ENCODE measurements at regions of chr1 and their contacts with region 1.

Region 1: GRCh38 chr1:183993132-183993531 is 44.4 kb downstream of the COLGALT2 start:
- DNase-seq: peak; percentile 57
- ATAC-seq: peak; percentile 69
- H3K4me3 ChIP-seq: no peak overlapping the region
- H3K27ac ChIP-seq: no peak overlapping the region
- H3K4me1 ChIP-seq: peaks cover 32% of the 10 kb centered on the region
- H3K27me3 ChIP-seq: no peaks in the 10 kb centered on the region
- CTCF ChIP-seq: no peak

Region 2: DNA sequence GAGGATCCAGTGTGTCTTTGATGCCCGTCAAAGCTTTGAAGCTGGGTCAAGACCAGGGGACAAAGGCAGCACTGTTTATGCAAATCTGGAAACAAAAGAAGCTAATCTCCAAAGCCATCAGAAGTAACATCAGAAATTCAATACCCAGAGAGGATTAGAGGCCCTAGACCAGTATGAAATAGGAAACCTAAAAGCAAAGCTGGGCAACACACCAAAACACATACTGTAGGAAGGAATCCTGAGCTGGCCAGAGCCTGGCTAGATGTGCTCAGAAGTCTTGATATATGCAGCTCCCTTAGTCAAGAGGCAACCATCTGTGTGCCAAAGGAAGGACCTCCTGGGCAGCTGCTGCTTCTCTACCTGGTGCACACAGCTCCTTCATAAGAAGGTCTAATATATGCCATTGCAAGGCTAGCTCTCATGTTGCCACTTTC is 32.1 kb after region 1 on chr1:
- CTCF ChIA-PET with region 1: no interaction called
- POLR2A ChIA-PET with region 1: no interaction called
- intact Hi-C with region 1: loop called (anchors 5 kb)
- DNase-seq: peak; percentile 70
- ATAC-seq: peak; percentile 99
- H3K4me3 ChIP-seq: no peak overlapping the region
- H3K27ac ChIP-seq: no peak overlapping the region
- H3K4me1 ChIP-seq: peaks cover 14% of the 10 kb centered on the region
- H3K27me3 ChIP-seq: no peaks in the 10 kb centered on the region
- CTCF ChIP-seq: no peak

Measured in PC-3 (cell line).